ENCODE measurements at regions of chr7 and their contacts with region 1.

Region 1: DNA sequence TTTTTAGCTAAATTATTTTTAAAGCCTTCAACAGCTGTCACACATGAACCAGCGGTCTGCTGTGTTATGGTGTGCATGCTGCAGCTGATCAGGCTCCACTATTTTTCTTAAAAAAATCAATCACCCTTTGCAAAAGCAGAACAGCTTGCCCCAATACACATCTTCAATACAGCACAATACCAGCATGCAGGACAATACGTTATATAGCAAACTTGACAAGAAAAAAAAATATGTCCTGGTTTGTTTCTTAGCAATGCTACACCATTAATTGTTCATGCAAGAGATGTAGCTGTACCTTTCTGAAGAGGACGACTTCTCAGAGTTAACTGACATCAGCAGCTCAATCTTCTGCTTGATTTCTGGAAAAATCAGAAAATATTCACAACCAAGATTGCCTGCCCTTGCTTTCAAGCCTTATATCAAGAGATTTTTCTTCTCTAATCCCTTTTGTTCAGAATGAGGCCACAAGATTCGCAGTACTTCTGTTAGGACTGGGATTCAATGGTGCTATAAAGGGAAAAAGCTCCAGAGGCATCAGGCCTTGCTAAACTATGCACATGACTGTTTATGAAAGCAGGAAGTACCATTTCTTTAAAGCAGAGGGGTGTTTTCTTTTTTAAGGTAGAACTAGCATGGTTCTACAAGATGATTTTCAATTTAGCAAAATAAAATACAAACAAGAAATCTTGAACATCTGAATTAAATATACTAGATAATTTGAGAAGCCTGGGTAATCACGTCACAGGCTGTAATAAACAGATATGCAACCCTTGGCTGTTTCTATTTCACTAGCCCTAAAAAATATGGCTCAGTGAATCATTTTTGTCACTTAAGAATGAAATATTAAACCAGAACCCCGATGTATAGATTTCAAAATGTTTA is 120.0 kb downstream of the SRPK2 start:
- DNase-seq: peak in 2 of 9 experiments; percentile 44 to 64
- ATAC-seq: peak; percentile 68
- H3K4me3 ChIP-seq: peak overlapping the region; percentile 44 to 52
- H3K4me3 Mint-ChIP-seq: peak overlapping the region; percentile 88
- H3K27ac ChIP-seq: peak overlapping the region; percentile 28 to 67
- H3K27ac Mint-ChIP-seq: peak overlapping the region; percentile 91
- H3K4me1 ChIP-seq: peaks cover 31% of the 10 kb centered on the region
- H3K4me1 Mint-ChIP-seq: peaks cover 70% of the 10 kb centered on the region
- H3K27me3 ChIP-seq: no peaks in the 10 kb centered on the region
- H3K27me3 Mint-ChIP-seq: no peaks in the 10 kb centered on the region
- CTCF ChIP-seq: no peak

Region 2: DNA sequence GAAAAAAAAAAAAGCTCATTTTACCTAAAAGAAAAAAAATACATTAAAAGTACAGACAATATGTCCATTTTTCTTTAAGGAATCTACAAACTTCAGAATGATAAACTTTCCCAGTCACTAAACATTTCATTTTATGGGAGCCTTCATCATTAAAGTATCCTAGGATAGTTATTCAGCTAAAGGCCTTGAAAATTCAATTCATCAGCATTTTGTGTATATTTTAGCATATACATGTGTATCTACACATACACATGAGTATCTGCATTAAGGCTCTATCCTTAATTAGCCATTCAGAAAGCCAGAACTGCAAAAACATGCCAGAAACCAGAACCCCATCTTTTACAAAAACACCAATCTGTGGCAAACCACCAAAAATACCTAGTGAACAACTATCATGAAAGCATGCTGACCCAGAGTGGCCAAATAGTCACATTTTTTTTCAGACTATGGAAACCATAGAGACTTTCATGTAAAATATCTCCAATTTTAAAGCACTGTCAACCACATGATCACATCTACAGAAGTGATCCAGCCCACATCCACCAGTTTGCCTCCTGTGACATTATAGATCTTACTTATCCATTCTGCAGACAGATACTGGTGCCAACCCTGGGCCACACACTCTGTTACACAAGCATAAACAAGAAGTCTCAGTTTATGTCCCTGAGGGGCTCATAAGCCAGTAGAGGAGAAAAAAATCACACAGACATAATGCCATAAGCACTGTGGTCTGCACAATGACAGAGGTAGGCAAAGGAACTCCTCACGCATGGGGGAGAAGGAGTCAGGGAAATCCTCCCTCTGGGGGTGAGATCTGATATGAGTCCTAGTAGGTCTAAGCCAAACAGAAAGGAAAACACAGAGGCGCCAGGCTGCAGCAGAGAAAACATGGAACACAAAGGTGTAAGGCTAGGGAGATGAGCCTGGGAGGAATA is 40.8 kb after region 1 on chr7:
- CTCF ChIA-PET with region 1: no interaction called
- POLR2A ChIA-PET with region 1: interaction called, 5 read pairs
- intact Hi-C with region 1: loop called in 1 of 2 experiments (anchors 5 kb)
- DNase-seq: peak in 2 of 9 experiments; percentile 12 to 29
- ATAC-seq: peak; percentile 40
- H3K4me3 ChIP-seq: no peak overlapping the region
- H3K4me3 Mint-ChIP-seq: no peak overlapping the region
- H3K27ac ChIP-seq: no peak overlapping the region
- H3K27ac Mint-ChIP-seq: no peak overlapping the region
- H3K4me1 ChIP-seq: peaks cover 21% of the 10 kb centered on the region
- H3K4me1 Mint-ChIP-seq: peaks cover 65% of the 10 kb centered on the region
- H3K27me3 ChIP-seq: no peaks in the 10 kb centered on the region
- H3K27me3 Mint-ChIP-seq: no peaks in the 10 kb centered on the region
- CTCF ChIP-seq: no peak

Region 3: GRCh38 chr7:105439174-105439893 is 170.6 kb after region 1 on chr7:
- CTCF ChIA-PET with region 1: no interaction called
- POLR2A ChIA-PET with region 1: no interaction called
- intact Hi-C with region 1: no loop called
- DNase-seq: no peak
- ATAC-seq: no peak
- H3K4me3 ChIP-seq: no peak overlapping the region
- H3K4me3 Mint-ChIP-seq: no peak overlapping the region
- H3K27ac ChIP-seq: no peak overlapping the region
- H3K27ac Mint-ChIP-seq: no peak overlapping the region
- H3K4me1 ChIP-seq: no peaks in the 10 kb centered on the region
- H3K4me1 Mint-ChIP-seq: peaks cover 2% of the 10 kb centered on the region
- H3K27me3 ChIP-seq: no peaks in the 10 kb centered on the region
- H3K27me3 Mint-ChIP-seq: no peaks in the 10 kb centered on the region
- CTCF ChIP-seq: no peak

Measured in CD8-positive, alpha-beta T cell (primary cell).